ENCODE measurements at regions of chr4 and their contacts with region 1.

Region 1: GRCh38 chr4:138242076-138242833 is at the start of gene SLC7A11:
- DNase-seq: peak; percentile 93
- ATAC-seq: peak; percentile 83
- H3K4me3 ChIP-seq: peak within 1 kb of the TSS; percentile 91
- H3K27ac ChIP-seq: peak within 1 kb of the TSS; percentile 91
- H3K4me1 ChIP-seq: peaks cover 25% of the 10 kb centered on the region
- H3K27me3 ChIP-seq: no peaks in the 10 kb centered on the region
- CTCF ChIP-seq: no peak
- total RNA-seq, gene SLC7A11: 13.3 and 14.0 TPM in 2 replicates

Region 2: GRCh38 chr4:137545461-137545861 is 696.8 kb before region 1 on chr4:
- CTCF ChIA-PET with region 1: no interaction called
- POLR2A ChIA-PET with region 1: no interaction called
- intact Hi-C with region 1: no loop called
- DNase-seq: no peak
- ATAC-seq: no peak
- H3K4me3 ChIP-seq: no peak overlapping the region
- H3K27ac ChIP-seq: no peak overlapping the region
- H3K4me1 ChIP-seq: no peaks in the 10 kb centered on the region; the same call in 1 of the 2 replicates
- H3K27me3 ChIP-seq: no peaks in the 10 kb centered on the region
- CTCF ChIP-seq: no peak

Region 3: DNA sequence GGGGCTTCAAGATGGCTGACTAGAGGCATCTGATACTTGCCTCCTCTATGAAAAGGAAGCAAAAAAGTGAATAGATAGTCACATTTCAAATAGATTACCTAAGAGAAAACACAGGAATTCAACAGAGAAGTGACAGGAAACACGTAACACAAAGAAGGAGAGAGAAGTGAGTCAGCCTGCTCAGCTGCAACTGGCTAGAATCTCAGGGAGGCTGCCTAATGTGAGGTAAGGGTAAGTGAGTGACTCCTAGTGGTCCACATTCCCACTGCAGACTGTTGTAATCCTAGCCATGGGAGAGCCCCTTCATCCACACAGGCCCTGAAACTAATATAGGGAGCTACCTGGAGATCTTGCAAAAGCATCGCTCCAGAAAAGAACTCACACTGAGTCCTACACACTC is 179.3 kb before region 1 on chr4:
- CTCF ChIA-PET with region 1: no interaction called
- POLR2A ChIA-PET with region 1: no interaction called
- intact Hi-C with region 1: no loop called
- DNase-seq: peak; percentile 44
- ATAC-seq: peak; percentile 64
- H3K4me3 ChIP-seq: no peak overlapping the region
- H3K27ac ChIP-seq: no peak overlapping the region
- H3K4me1 ChIP-seq: no peaks in the 10 kb centered on the region; the same call in 1 of the 2 replicates
- H3K27me3 ChIP-seq: no peaks in the 10 kb centered on the region
- CTCF ChIP-seq: peak; percentile 32; the same call in 1 of the 2 replicates

Region 4: GRCh38 chr4:138275764-138276621 is 33.7 kb after region 1 on chr4:
- CTCF ChIA-PET with region 1: no interaction called
- POLR2A ChIA-PET with region 1: interaction called, 5 read pairs
- intact Hi-C with region 1: loop called (anchors 2 kb)
- DNase-seq: peak; percentile 81
- ATAC-seq: peak; percentile 76
- H3K4me3 ChIP-seq: no peak overlapping the region
- H3K27ac ChIP-seq: peak overlapping the region; percentile 72
- H3K4me1 ChIP-seq: peaks cover 42% of the 10 kb centered on the region
- H3K27me3 ChIP-seq: no peaks in the 10 kb centered on the region
- CTCF ChIP-seq: no peak

Region 5: DNA sequence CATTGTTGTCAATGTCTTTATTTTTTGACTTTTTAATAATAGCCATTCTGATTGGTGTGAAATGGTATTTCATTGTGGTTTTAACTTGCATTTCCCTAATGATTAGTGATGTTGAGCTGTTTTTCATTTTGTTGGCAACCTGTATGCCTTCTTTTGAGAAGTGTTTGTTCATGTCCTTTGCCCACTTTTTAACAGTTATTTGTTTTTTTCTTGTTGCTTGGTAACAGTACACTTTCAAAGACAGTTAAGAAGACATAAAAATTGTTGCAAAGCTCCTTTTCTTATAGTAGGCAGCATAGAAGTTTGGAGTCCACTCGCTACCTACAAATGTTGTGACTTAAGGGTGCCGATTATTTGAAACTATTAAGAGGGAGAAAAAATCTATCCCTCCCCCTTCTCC is 48.5 kb after region 1 on chr4:
- CTCF ChIA-PET with region 1: no interaction called
- POLR2A ChIA-PET with region 1: interaction called, 10 read pairs
- intact Hi-C with region 1: no loop called
- DNase-seq: no peak
- ATAC-seq: no peak
- H3K4me3 ChIP-seq: no peak overlapping the region
- H3K27ac ChIP-seq: no peak overlapping the region
- H3K4me1 ChIP-seq: no peaks in the 10 kb centered on the region
- H3K27me3 ChIP-seq: no peaks in the 10 kb centered on the region
- CTCF ChIP-seq: no peak

Region 6: GRCh38 chr4:138347561-138347960 is 105.3 kb after region 1 on chr4:
- CTCF ChIA-PET with region 1: no interaction called
- POLR2A ChIA-PET with region 1: no interaction called
- intact Hi-C with region 1: loop called (anchors 1 kb)
- DNase-seq: peak; percentile 52
- ATAC-seq: peak; percentile 74
- H3K4me3 ChIP-seq: no peak overlapping the region
- H3K27ac ChIP-seq: peak overlapping the region; percentile 97
- H3K4me1 ChIP-seq: peaks cover 21% of the 10 kb centered on the region
- H3K27me3 ChIP-seq: no peaks in the 10 kb centered on the region
- CTCF ChIP-seq: no peak

Region 7: DNA sequence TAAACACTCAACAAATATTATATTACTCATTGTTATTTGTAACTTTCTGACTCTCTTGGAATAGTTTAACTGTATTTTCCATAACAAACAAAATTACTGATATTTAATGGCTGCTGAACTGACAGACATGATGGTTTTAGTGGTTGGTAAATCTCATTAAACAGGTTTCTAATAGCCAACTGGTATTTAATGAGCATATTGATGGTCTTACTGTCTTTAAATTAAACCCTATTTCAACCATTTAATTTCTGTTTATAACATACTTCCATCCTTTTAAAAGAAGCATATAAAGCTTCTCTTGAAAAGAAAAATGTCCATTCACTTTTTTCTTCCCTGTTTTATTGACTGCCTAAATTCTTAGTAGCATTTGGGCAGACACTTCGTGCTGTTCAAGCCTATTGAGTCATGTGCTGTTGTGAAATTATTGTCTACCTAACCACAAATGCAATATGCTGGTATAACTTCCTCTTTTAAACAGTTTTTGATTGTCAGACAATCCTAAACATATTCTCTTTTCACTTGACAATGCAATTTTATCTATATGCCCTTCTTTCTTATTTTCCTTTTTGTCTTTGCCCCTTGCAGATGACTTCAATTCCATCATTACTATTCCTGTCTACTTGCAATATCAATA is 163.8 kb after region 1 on chr4:
- CTCF ChIA-PET with region 1: no interaction called
- POLR2A ChIA-PET with region 1: no interaction called
- intact Hi-C with region 1: loop called (anchors 10 kb)
- DNase-seq: peak; percentile 49
- ATAC-seq: peak; percentile 31; the same call in 1 of the 2 replicates
- H3K4me3 ChIP-seq: no peak overlapping the region
- H3K27ac ChIP-seq: no peak overlapping the region
- H3K4me1 ChIP-seq: peaks cover 15% of the 10 kb centered on the region
- H3K27me3 ChIP-seq: no peaks in the 10 kb centered on the region
- CTCF ChIP-seq: no peak

Region 8: GRCh38 chr4:138522366-138522765 is 280.1 kb after region 1 on chr4:
- CTCF ChIA-PET with region 1: no interaction called
- POLR2A ChIA-PET with region 1: no interaction called
- intact Hi-C with region 1: loop called (anchors 1 kb)
- DNase-seq: peak; percentile 61
- ATAC-seq: peak; percentile 79
- H3K4me3 ChIP-seq: no peak overlapping the region
- H3K27ac ChIP-seq: no peak overlapping the region
- H3K4me1 ChIP-seq: no peaks in the 10 kb centered on the region
- H3K27me3 ChIP-seq: no peaks in the 10 kb centered on the region
- CTCF ChIP-seq: peak; percentile 65

Measured in PC-3 (cell line).